ENCODE measurements at regions of chr10 and their contacts with region 1.

Region 1: DNA sequence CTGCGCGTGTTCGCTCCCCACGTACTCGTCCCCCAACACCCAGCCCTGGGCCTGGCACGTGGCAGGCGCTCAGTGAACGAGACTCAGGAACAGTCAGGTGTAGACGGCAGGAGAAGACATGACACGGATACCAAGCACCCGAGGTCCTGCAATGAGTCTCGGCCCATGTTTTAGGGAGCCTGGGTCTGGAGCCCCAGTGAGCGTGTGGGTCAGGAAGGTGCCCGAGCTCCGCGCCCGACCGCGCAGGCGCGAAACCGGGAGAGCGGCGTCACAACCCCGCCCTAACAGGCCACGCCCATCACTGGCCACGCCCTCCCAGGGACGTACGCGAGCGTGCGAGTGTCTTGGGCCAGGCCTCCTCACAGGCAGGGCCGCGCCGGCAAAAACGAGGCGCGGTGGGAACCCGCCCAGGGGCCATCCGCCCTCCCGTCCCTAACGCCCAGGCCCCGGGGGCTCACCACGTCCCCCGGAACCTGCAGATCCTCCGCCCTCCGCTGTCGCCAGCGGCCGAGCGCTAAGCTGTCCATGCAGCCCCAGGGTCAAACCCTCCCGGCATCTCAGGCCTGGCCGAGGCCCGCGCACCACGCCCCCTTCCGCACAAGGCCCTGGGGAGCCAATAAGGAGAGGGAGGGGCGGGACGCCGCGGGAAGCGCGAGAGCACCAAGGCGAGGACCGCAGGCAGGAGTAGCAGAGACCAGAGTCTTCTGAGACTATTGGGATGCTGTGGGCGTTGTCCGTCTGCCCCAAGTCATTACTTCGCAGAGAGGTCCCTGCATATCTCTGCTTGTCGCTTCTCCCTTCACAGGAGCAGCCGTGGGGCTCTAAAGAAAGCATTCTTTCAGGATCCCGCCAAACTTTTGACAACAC is at the start of gene C10orf143:
- DNase-seq: peak; percentile 99
- ATAC-seq: peak; percentile 95
- total RNA-seq, gene C10orf143: 1.3 TPM

Region 2: DNA sequence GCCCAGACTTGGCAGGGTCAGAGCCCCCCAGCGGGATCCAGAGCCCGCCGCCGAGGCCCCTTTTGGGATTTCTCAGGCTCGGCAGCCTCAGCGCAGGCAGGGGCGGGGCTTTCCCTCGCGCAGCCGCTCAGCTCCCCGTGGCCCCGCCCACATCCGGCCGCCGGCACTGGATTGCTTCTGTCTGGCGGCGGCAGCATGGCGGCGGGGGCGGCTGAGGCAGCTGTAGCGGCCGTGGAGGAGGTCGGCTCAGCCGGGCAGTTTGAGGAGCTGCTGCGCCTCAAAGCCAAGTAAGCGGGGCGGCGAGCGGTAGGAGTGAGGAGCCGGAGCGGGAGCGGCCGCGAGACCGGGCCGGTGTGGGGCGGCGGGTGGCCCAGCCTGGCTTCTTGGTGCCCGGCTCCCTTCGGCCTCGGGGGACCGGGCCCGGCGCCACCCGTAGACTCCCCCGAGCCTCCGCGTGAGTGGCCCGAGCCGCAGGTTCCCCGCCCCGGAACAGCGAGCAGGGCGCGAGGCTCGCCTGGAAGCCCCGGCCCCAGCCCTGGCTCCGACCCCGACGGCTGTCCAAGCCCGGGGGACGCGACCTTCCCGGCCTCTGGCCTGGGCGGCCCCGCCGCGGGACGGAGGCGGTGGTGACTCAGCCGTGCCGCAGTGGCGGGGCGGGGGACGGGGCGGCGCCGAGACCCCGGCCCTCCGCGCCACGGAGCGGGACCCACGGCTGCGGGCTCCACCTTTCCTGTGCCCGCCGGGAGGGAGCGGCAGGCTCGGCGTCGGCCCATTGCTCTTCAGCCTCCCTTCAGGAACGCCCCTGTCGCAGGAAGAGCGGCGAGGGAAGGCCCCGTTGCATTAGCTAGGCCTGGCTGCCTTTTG is 26.0 kb after region 1 on chr10 and contains the start of gene GLRX3:
- intact Hi-C with region 1: loop called (anchors 2 kb)
- DNase-seq: peak; percentile 96
- ATAC-seq: peak; percentile 99
- total RNA-seq, gene GLRX3: 64.8 TPM